A673 (cell line): ENCODE measurements at regions of chr6 and their contacts with region 1.

Region 1: GRCh38 chr6:32195652-32195901 is 3.1 kb upstream of the GPSM3 start:
- DNase-seq: peak; percentile 100
- H3K4me3 ChIP-seq: peak overlapping the region; percentile 64
- H3K27ac ChIP-seq: peak overlapping the region; percentile 99
- H3K4me1 ChIP-seq: peaks cover 41% of the 10 kb centered on the region
- H3K27me3 ChIP-seq: no peaks in the 10 kb centered on the region
- CTCF ChIP-seq: peak; percentile 12; the same call in 1 of the 2 replicates

Region 2: DNA sequence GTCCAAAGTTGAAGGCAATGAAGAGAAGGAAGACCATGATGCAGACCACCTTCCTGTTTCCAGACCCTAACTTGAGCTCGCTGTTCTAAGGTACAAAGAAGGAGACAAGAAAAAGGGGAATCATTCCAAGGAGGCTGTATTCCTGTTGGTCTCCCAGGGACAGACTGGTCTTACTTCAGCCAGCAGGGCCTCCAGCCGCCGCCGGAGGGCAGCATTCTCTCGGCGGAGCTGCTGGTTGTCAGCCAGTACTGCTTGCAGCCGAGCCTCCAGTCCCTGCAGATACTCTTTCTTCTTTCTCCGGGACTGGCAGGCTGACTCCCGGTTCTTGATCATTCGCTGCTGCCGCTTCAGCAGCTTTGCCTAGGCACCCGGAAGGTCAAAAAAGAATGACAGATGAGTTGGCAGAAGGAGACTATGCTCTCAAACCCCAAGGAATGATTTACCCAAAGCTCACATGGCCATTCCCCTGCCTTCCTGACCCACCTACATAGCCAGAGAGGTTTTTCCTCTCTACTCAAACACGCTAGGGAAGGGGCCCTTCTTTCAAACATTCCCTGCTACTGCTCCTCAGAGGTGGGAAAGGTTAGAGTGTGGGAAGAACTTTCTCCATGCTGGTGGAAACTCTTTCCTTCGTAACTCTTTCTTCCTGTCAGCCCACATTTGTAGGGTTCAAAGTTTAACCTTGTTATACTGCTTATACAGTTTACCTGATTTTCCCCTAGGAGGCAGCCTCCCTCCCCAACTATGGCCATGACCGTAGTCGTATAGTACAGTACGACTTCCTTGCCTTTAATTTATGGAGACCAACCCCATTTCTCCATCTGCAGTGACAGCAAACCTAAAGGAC is 76.6 kb before region 1 on chr6:
- CTCF ChIA-PET with region 1: no interaction called
- POLR2A ChIA-PET with region 1: no interaction called
- intact Hi-C with region 1: loop called (anchors 1 kb)
- DNase-seq: peak; percentile 84
- H3K4me3 ChIP-seq: no peak overlapping the region
- H3K27ac ChIP-seq: peak overlapping the region; percentile 25
- H3K4me1 ChIP-seq: no peaks in the 10 kb centered on the region
- H3K27me3 ChIP-seq: no peaks in the 10 kb centered on the region
- CTCF ChIP-seq: peak; percentile 93

Region 3: GRCh38 chr6:32127717-32128592 is 67.6 kb before region 1 on chr6 and contains the start of gene ATF6B:
- CTCF ChIA-PET with region 1: interaction called, 3 read pairs
- POLR2A ChIA-PET with region 1: interaction called, 3 read pairs
- intact Hi-C with region 1: loop called (anchors 2 kb)
- DNase-seq: peak; percentile 100
- H3K4me3 ChIP-seq: peak within 1 kb of the TSS; percentile 89
- H3K27ac ChIP-seq: peak within 1 kb of the TSS; percentile 97
- H3K4me1 ChIP-seq: peaks cover 21% of the 10 kb centered on the region
- H3K27me3 ChIP-seq: no peaks in the 10 kb centered on the region
- CTCF ChIP-seq: no peak
- total RNA-seq, gene ATF6B: 70.2 and 74.7 TPM in 2 replicates

Region 4: DNA sequence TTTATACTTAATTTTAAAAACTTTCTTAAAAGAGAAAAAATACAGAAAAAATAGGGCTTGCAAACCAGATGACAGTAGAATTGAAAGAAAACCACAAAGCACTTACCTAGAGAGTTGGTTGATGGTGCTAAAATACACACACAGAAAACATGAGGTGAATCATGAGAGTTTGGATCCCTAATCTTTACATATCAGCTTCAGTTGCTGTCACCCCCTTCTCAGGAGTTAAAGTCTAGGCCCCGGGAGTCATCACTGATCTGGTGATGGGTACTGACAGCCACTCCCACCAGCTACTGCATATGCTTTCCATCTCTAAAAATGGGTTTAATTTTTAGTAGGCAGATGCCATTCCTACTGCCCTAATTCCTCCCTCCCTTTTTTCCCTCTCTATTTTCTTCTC is 159.4 kb after region 1 on chr6:
- CTCF ChIA-PET with region 1: no interaction called
- POLR2A ChIA-PET with region 1: no interaction called
- intact Hi-C with region 1: no loop called
- DNase-seq: no peak
- H3K4me3 ChIP-seq: no peak overlapping the region
- H3K27ac ChIP-seq: no peak overlapping the region
- H3K4me1 ChIP-seq: no peaks in the 10 kb centered on the region
- H3K27me3 ChIP-seq: peaks cover 3% of the 10 kb centered on the region
- CTCF ChIP-seq: no peak

Region 5: DNA sequence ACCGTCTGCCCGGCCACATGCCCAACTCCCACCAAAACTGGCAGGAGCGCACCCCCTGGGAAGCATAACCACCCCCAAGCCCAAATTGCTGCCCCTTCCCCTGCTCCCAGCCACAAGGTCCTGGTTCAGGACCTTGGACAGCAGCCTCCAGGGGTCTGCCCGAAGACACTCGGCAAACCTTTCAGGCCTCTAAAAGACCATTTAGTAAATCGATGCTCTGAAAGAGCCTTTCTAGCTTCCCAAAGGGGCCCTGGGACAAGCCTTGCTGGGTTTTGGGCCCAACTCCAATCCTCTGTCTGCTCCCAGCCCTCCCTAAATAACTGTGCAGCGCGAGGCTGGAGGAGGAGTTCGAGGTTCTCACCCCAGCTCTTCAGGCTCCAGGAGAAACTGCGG is 1919.8 kb after region 1 on chr6:
- CTCF ChIA-PET with region 1: no interaction called
- POLR2A ChIA-PET with region 1: no interaction called
- intact Hi-C with region 1: no loop called
- DNase-seq: peak; percentile 30
- H3K4me3 ChIP-seq: no peak overlapping the region
- H3K27ac ChIP-seq: no peak overlapping the region
- H3K4me1 ChIP-seq: no peaks in the 10 kb centered on the region
- H3K27me3 ChIP-seq: peaks cover 58% of the 10 kb centered on the region
- CTCF ChIP-seq: no peak